Astrocyte of the cerebellum (primary cell): ENCODE measurements at regions of chr6 and their contacts with region 1.

Region 1: DNA sequence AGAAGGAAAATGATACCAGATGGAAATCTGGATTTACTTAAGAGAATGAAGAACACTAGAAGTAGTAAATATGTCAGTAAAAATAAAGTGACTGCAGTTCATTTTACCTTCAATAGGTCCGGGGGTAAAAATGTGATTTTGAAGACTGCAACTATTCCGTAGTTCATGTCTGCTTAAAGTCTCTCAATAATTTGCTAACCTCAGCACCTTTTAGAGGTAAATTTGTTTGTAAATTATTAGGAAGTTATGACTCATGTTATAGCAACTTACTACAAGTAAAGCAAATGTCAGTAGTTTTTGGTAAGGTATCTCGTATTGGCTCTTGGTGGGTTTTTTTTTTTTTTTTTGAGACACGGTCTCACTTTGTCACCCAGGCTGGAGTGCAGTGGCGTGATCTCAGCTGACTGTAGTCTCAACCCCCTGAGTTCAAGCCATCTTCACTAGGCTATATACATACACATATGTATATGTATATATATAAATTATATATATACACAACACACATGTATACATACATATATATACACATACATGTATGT is 32.1 kb downstream of the BICRAL start:
- DNase-seq: no peak
- H3K4me3 ChIP-seq: no peak overlapping the region
- CTCF ChIP-seq: no peak

Region 2: GRCh38 chr6:42851599-42851998 is 37.6 kb after region 1 on chr6:
- in situ Hi-C with region 1: loop called (anchors 5 kb)
- DNase-seq: no peak
- H3K4me3 ChIP-seq: no peak overlapping the region
- CTCF ChIP-seq: no peak